Activated T-helper 1 cell treated with anti-CD3 and anti-CD28 coated beads, Interleukin-12 subunit alpha, Interleukin-12 subunit beta, Interleukin-2, Interleukin-4 antibody, amounts not matched to agents 30 ng/mL and 10 ng/mL and 1 ng/mL, durations not matched to agents 14 hours and 24 hours and 36 hours (primary cell): ENCODE measurements at regions of chr9 and their contacts with region 1.

Region 1: DNA sequence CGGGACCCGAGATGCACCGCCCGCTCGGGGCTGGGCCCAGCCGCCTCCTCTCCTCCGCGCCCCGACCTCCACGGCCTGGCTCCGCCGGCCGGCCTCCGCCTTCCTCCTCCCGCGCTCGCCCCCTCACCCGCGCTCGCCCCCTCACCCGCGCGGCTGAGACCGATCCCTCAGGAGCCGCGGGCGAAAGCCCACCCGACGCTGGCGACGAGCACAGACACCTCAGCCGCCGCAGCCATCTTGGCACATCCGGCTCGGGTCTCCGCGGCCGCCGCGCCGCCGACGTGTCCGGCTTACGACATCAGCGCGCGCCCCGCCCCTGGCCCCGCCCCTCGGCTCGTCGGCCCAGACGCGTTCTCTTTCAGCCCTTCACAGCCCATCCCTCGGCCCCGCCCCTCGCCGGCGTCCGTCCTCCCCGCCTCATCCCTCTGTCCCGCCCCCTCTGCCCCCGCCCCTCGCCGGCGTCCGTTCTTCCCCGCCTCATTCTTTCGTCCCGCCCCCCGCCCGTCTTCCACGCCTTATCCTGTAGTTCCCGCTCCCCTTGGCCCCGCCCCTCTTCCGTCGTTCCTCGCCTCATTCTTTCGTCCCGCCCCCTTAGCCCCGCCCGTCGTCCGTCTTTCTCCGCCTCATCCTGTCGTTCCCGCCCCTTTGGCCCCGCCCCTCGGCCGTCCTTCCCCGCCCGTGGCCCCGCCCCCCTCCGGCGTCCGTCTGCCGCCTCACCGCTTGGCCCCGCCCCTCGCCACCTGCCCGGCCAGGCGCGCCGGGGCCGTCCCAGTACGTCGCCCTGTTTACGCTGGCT is at the start of gene SEC16A:
- DNase-seq: peak; percentile 98
- H3K4me3 Mint-ChIP-seq: peak within 1 kb of the TSS; percentile 96
- H3K27ac Mint-ChIP-seq: peak within 1 kb of the TSS; percentile 95
- H3K4me1 Mint-ChIP-seq: peaks cover 23% of the 10 kb centered on the region
- H3K27me3 Mint-ChIP-seq: no peaks in the 10 kb centered on the region
- total RNA-seq, gene SEC16A: 87.3 and 88.5 TPM in 2 replicates

Region 2: GRCh38 chr9:136400038-136400834 is 82.8 kb before region 1 on chr9 and contains the start of gene SNAPC4:
- intact Hi-C with region 1: loop called (anchors 2 kb)
- DNase-seq: peak; percentile 86
- H3K4me3 Mint-ChIP-seq: peak within 1 kb of the TSS; percentile 91
- H3K27ac Mint-ChIP-seq: peak within 1 kb of the TSS; percentile 76
- H3K4me1 Mint-ChIP-seq: peaks cover 40% of the 10 kb centered on the region
- H3K27me3 Mint-ChIP-seq: no peaks in the 10 kb centered on the region
- total RNA-seq, gene SNAPC4: 26.7 TPM in 2 replicates

Region 3: DNA sequence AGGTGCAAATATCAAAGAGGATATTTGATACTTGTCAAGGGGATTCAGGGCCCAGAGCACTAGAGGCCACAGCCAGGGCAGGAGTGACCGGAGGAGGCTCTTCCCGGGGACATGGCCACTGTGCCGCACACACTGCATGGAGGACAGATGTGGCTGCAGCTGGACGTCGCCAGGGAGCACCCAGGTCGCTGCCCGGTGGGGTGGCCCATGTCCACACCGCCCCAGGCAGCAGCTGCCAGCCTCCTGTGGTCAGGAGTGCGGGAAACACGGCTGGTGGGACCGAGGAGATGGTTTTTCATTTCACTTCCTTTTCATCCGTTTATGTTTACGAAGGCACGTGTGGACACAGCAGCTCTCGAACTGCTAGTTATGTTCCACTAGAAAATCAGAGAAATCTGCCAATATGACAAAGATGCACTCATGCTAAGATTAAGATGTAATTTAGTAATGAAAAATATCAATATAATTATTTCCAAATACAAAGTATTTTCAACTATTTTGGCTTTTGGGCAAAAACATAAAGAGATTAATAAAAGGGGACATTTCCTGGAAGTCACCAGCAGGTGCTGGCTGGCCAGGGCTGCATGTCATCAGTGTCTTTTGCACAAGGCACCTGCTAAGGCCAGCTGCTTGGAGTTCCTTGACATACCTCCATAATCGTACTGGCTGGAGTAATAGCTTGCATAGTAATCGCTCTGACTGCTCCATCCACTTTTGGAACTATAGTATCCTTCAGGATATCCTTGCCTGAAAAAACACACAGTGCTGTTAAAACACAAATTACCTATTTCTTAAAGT is 15.0 kb before region 1 on chr9:
- intact Hi-C with region 1: no loop called
- DNase-seq: no peak
- H3K4me3 Mint-ChIP-seq: no peak overlapping the region
- H3K27ac Mint-ChIP-seq: no peak overlapping the region
- H3K4me1 Mint-ChIP-seq: no peaks in the 10 kb centered on the region
- H3K27me3 Mint-ChIP-seq: no peaks in the 10 kb centered on the region

Region 4: GRCh38 chr9:136533775-136534157 is 50.8 kb after region 1 on chr9:
- intact Hi-C with region 1: loop called (anchors 1 kb)
- DNase-seq: peak; percentile 72
- H3K4me3 Mint-ChIP-seq: peak overlapping the region; percentile 71
- H3K27ac Mint-ChIP-seq: peak overlapping the region; percentile 86
- H3K4me1 Mint-ChIP-seq: peaks cover 30% of the 10 kb centered on the region
- H3K27me3 Mint-ChIP-seq: no peaks in the 10 kb centered on the region

Region 5: DNA sequence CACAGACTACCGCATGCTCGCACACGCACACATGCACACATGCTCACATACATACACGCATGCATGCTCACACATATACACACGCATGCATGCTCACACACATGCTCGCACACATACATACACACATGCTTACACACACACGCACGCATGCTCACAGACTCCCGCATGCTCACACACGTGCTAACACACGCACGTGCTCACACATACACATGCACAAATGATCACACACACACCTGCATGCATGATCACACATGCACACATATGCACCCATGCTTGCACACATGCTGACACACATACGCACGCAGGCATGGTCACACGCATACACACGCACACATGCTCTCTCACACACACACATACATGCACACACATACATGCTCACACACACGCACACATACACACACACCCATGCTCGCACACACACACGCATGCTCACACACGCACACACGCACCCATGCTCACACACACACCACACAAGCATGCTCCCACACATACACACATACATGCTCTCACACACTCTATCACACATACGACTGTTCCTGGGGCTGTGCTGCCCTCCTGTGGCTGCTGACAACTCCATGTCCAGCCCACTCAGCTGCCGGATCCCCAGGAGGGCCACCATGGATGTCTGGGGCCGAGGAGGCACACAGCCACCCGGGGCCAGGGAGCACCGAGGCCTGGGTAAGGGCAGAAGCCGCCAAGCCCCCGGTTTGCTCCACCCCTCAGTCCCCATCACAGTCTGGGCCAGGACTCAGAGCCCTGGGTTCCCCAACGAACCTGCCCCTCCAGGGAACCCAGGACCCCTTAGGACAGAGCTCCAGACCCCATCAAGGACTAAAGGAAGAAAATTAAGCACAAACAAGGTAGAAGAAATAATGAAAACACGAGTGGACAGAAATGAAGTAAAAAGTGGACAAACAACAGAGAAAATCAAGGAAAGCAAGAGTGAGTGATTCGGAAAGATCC is 148.3 kb after region 1 on chr9:
- intact Hi-C with region 1: loop called (anchors 1 kb)
- DNase-seq: peak; percentile 65
- H3K4me3 Mint-ChIP-seq: no peak overlapping the region
- H3K27ac Mint-ChIP-seq: no peak overlapping the region
- H3K4me1 Mint-ChIP-seq: no peaks in the 10 kb centered on the region
- H3K27me3 Mint-ChIP-seq: peaks cover 8% of the 10 kb centered on the region

Region 6: GRCh38 chr9:136728080-136728547 is 245.1 kb after region 1 on chr9:
- intact Hi-C with region 1: loop called (anchors 1 kb)
- DNase-seq: peak; percentile 89
- H3K4me3 Mint-ChIP-seq: peak overlapping the region; percentile 57
- H3K27ac Mint-ChIP-seq: no peak overlapping the region
- H3K4me1 Mint-ChIP-seq: peaks cover 25% of the 10 kb centered on the region
- H3K27me3 Mint-ChIP-seq: peaks cover 4% of the 10 kb centered on the region

Region 7: GRCh38 chr9:136902259-136902821 is 419.3 kb after region 1 on chr9:
- intact Hi-C with region 1: no loop called
- DNase-seq: peak; percentile 88
- H3K4me3 Mint-ChIP-seq: peak overlapping the region; percentile 80
- H3K27ac Mint-ChIP-seq: peak overlapping the region; percentile 99
- H3K4me1 Mint-ChIP-seq: peaks cover 63% of the 10 kb centered on the region
- H3K27me3 Mint-ChIP-seq: no peaks in the 10 kb centered on the region

Region 8: DNA sequence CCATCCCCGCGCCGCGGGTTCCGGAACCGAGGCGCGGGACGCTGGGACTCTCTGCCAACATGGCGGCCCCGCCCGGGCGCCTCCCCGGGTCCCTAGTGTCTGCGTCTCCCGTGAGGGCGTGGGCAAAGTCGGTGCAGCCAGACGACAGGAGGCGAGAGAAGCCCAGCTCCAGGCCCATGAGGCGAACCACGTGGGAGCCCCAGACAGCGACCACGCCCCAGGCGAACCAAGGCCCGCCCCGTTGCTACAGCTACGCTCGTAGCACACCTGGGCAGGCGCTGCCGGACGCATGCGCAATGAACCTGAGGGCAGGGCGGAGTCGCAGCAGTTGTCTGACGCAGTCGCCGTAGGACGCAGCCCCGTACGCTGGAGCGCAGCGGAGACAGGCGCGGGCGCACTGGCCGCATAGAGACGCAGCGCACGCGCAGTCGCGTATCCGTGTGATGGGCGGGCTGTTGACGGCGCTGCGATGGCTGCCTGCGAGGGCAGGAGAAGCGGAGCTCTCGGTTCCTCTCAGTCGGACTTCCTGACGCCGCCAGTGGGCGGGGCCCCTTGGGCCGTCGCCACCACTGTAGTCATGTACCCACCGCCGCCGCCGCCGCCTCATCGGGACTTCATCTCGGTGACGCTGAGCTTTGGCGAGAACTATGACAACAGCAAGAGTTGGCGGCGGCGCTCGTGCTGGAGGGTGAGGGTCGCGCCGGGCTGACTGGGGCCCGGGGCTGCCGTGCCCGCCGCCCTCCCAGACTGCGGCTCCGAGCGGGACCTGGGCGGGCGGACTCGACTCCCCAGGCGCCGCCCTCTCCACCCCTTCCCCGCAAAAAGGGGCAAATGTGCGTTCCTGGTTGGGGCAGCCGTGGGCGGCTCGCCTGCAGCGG is 603.8 kb after region 1 on chr9 and contains the start of gene MAN1B1:
- intact Hi-C with region 1: loop called (anchors 2 kb)
- DNase-seq: peak; percentile 100
- H3K4me3 Mint-ChIP-seq: peak within 1 kb of the TSS; percentile 88
- H3K27ac Mint-ChIP-seq: peak within 1 kb of the TSS; percentile 94
- H3K4me1 Mint-ChIP-seq: peaks cover 33% of the 10 kb centered on the region
- H3K27me3 Mint-ChIP-seq: no peaks in the 10 kb centered on the region
- total RNA-seq, gene MAN1B1: 48.1 and 53.6 TPM in 2 replicates